MCF 10A (cell line): ENCODE measurements at regions of chr14 and their contacts with region 1.

Region 1: GRCh38 chr14:50619556-50620141 is 48.5 kb downstream of the SAV1 start:
- DNase-seq: peak; percentile 43
- H3K4me3 Mint-ChIP-seq: no peak overlapping the region
- H3K27ac Mint-ChIP-seq: no peak overlapping the region
- H3K4me1 Mint-ChIP-seq: peaks cover 7% of the 10 kb centered on the region
- H3K27me3 Mint-ChIP-seq: no peaks in the 10 kb centered on the region
- CTCF ChIP-seq: peak; percentile 57

Region 2: DNA sequence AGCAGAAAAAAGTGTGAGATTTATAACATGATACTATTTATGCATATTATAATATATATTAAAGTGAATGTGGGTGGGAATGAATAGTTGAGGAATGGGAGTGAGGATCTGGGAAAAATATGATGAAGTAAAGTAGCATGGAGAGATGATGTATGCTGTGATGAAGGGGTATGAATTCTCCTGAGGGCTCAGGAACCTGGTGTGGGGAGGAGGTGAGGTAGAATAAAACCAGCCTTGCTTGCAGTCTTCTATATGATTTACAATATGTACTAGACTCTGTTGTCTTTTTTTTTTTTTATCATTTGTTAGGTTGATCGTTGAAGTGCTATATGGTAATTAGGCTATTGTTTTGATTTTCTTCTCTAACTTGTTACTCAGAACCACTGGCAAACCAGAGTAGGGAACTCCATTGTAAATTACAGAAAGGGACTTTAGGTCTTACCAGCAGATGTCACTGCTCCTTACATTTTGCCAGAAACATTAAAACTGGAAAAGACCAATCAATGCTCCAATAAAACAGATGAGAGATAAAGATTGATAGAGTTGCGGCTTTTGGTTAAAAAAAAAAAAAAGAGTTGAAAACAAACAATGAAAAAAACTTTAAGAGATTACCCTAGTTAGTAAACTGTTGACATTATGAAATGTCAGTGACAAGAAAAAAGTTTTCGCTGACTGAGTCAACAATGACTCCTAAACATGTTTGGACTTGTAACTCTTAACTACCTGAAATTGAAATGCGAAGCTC is 19.8 kb before region 1 on chr14:
- CTCF ChIA-PET with region 1: interaction called, 11 read pairs
- POLR2A ChIA-PET with region 1: interaction called, 9 read pairs
- intact Hi-C with region 1: no loop called
- DNase-seq: peak; percentile 72
- H3K4me3 Mint-ChIP-seq: peak overlapping the region; percentile 59
- H3K27ac Mint-ChIP-seq: peak overlapping the region; percentile 98
- H3K4me1 Mint-ChIP-seq: peaks cover 43% of the 10 kb centered on the region
- H3K27me3 Mint-ChIP-seq: no peaks in the 10 kb centered on the region
- CTCF ChIP-seq: peak; percentile 37

Region 3: GRCh38 chr14:50607181-50607580 is 12.5 kb before region 1 on chr14:
- CTCF ChIA-PET with region 1: interaction called, 17 read pairs
- POLR2A ChIA-PET with region 1: interaction called, 3 read pairs
- intact Hi-C with region 1: no loop called
- DNase-seq: no peak
- H3K4me3 Mint-ChIP-seq: no peak overlapping the region
- H3K27ac Mint-ChIP-seq: no peak overlapping the region
- H3K4me1 Mint-ChIP-seq: peaks cover 22% of the 10 kb centered on the region
- H3K27me3 Mint-ChIP-seq: no peaks in the 10 kb centered on the region
- CTCF ChIP-seq: no peak

Region 4: GRCh38 chr14:50631408-50631821 is 11.8 kb after region 1 on chr14:
- CTCF ChIA-PET with region 1: interaction called, 34 read pairs
- POLR2A ChIA-PET with region 1: interaction called, 5 read pairs
- intact Hi-C with region 1: no loop called
- DNase-seq: no peak
- H3K4me3 Mint-ChIP-seq: no peak overlapping the region
- H3K27ac Mint-ChIP-seq: no peak overlapping the region
- H3K4me1 Mint-ChIP-seq: no peaks in the 10 kb centered on the region
- H3K27me3 Mint-ChIP-seq: no peaks in the 10 kb centered on the region
- CTCF ChIP-seq: no peak

Region 5: DNA sequence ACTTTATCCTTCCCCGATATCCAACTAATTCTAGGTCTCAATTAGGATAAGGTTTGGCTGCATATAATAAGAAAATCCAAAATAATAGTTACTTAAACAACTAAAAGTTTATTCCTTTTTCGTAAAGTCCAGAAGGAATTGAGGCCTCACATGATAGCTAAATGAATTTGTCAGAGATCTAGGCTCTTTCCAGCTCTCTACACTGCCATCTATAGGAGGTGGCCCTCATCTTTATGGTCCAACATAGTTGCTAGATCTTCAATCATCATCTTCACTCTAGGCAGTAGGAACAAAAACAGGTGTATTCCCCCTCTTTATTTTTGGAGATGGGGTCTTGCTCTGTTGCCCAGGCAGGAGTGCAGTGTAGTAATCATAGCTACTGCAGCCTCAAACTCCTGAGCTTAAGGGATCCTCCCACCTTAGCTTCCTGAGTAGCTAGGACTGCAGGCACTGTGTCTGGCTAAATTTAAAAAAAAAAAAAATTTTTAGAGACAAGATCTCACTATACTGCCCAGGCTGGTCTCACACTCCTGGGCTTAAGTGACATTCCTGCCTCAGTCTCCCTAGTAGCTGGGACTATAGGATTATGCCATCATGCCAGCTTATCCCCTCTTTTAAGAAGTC is 94.9 kb after region 1 on chr14:
- CTCF ChIA-PET with region 1: interaction called, 3 read pairs
- POLR2A ChIA-PET with region 1: no interaction called
- intact Hi-C with region 1: loop called (anchors 2 kb)
- DNase-seq: peak; percentile 26
- H3K4me3 Mint-ChIP-seq: no peak overlapping the region
- H3K27ac Mint-ChIP-seq: no peak overlapping the region
- H3K4me1 Mint-ChIP-seq: no peaks in the 10 kb centered on the region
- H3K27me3 Mint-ChIP-seq: no peaks in the 10 kb centered on the region
- CTCF ChIP-seq: peak; percentile 9